ENCODE measurements at regions of chr1 and their contacts with region 1.

Region 1: GRCh38 chr1:150464422-150464826 is 22.8 kb upstream of the TARS2 start:
- DNase-seq: peak; percentile 83
- ATAC-seq: peak; percentile 74
- H3K4me3 ChIP-seq: no peak overlapping the region
- H3K4me3 Mint-ChIP-seq: no peak overlapping the region
- H3K27ac ChIP-seq: no peak overlapping the region
- H3K27ac Mint-ChIP-seq: peak overlapping the region; percentile 5
- H3K4me1 ChIP-seq: peaks cover 0 to 3% of the 10 kb centered on the region in 2 donors
- H3K4me1 Mint-ChIP-seq: peaks cover 4% of the 10 kb centered on the region
- H3K27me3 ChIP-seq: no peaks in the 10 kb centered on the region
- H3K27me3 Mint-ChIP-seq: no peaks in the 10 kb centered on the region
- CTCF ChIP-seq: peak; percentile 82

Region 2: GRCh38 chr1:150529017-150529416 is 64.6 kb after region 1 on chr1:
- CTCF ChIA-PET with region 1: interaction called, 26 read pairs
- POLR2A ChIA-PET with region 1: no interaction called
- intact Hi-C with region 1: loop called (anchors 1 kb)
- DNase-seq: no peak
- ATAC-seq: no peak
- H3K4me3 ChIP-seq: no peak overlapping the region
- H3K4me3 Mint-ChIP-seq: no peak overlapping the region
- H3K27ac ChIP-seq: no peak overlapping the region
- H3K27ac Mint-ChIP-seq: no peak overlapping the region
- H3K4me1 ChIP-seq: no peaks in the 10 kb centered on the region
- H3K4me1 Mint-ChIP-seq: no peaks in the 10 kb centered on the region
- H3K27me3 ChIP-seq: no peaks in the 10 kb centered on the region
- H3K27me3 Mint-ChIP-seq: no peaks in the 10 kb centered on the region
- CTCF ChIP-seq: no peak

Region 3: GRCh38 chr1:150621497-150622302 is 157.3 kb after region 1 on chr1:
- CTCF ChIA-PET with region 1: interaction called, 11 read pairs
- POLR2A ChIA-PET with region 1: no interaction called
- intact Hi-C with region 1: loop called (anchors 2 kb)
- DNase-seq: peak; percentile 77
- ATAC-seq: peak; percentile 63
- H3K4me3 ChIP-seq: no peak overlapping the region
- H3K4me3 Mint-ChIP-seq: no peak overlapping the region
- H3K27ac ChIP-seq: peak overlapping the region; percentile 31 to 74
- H3K27ac Mint-ChIP-seq: peak overlapping the region; percentile 80
- H3K4me1 ChIP-seq: peaks cover 24 to 31% of the 10 kb centered on the region in 2 donors
- H3K4me1 Mint-ChIP-seq: peaks cover 30% of the 10 kb centered on the region
- H3K27me3 ChIP-seq: no peaks in the 10 kb centered on the region
- H3K27me3 Mint-ChIP-seq: no peaks in the 10 kb centered on the region
- CTCF ChIP-seq: peak; percentile 87